ENCODE measurements at regions of chr1 and their contacts with region 1.

Region 1: DNA sequence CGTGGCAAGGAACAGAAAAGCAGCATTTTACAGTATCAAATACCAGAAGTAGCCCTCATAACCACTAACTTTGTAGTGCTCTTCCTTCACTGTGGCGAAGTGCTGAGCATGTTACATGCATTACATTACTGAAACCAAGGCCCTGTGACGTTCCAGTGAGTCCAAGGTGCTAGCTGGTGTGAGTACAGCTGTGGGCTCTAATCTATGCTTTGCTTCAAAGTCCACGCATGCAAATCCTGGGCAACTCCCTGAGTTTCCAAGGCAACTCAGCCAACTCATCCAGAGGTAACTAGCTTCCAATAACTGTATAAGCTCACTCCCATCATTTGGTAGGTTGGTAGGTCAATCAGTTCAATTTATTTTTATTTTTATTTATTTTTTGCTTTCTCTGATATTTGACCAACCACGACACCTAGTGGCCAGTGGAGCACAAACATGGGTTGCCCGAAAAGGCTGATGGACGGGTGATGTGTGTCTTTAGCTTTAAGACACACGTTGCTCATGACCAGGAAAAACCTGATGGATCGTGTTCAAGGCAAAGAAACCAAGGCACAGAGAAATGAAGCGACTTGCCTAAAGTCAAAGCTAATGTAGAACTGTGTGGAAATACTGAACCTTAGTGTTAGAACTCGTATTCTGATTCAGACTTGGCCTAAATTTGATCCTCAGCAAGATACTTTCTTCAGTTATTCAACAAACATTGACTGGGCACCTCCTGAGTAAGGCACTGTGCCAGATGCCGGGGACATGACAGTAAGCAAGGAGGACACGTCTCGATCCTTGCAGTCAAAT is 73.0 kb downstream of the GNG12 start:
- DNase-seq: peak in 1 of 2 donors; percentile 48
- ATAC-seq: peak; percentile 84 to 87
- H3K4me3 ChIP-seq: no peak overlapping the region
- H3K27ac ChIP-seq: peak overlapping the region; percentile 65 to 75 (median 71)
- H3K4me1 ChIP-seq: peaks cover 21 to 28% of the 10 kb centered on the region in 2 donors
- H3K27me3 ChIP-seq: no peaks in the 10 kb centered on the region
- CTCF ChIP-seq: peak; percentile 85 to 93 (median 89)
- POLR2A ChIP-seq: no peak

Region 2: GRCh38 chr1:67535474-67535873 is 224.8 kb before region 1 on chr1:
- in situ Hi-C with region 1: loop called (anchors 5 kb)
- intact Hi-C with region 1: loop called (anchors 1 kb)
- DNase-seq: peak; percentile 59 to 74
- ATAC-seq: peak; percentile 82 to 92
- H3K4me3 ChIP-seq: no peak overlapping the region
- H3K27ac ChIP-seq: no peak overlapping the region
- H3K4me1 ChIP-seq: peaks cover 6% of the 10 kb centered on the region in 2 donors
- H3K27me3 ChIP-seq: no peaks in the 10 kb centered on the region
- CTCF ChIP-seq: peak; percentile 91 to 97 (median 92)
- POLR2A ChIP-seq: no peak

Region 3: GRCh38 chr1:67561704-67562113 is 198.5 kb before region 1 on chr1:
- in situ Hi-C with region 1: no loop called
- intact Hi-C with region 1: loop called (anchors 1 kb)
- DNase-seq: peak; percentile 94 to 99
- ATAC-seq: peak; percentile 90 to 91
- H3K4me3 ChIP-seq: peak overlapping the region in 2 of 4 donors; percentile 0 to 19
- H3K27ac ChIP-seq: peak overlapping the region; percentile 88 to 94 (median 90)
- H3K4me1 ChIP-seq: peaks cover 27 to 48% of the 10 kb centered on the region in 2 donors
- H3K27me3 ChIP-seq: no peaks in the 10 kb centered on the region
- CTCF ChIP-seq: peak; percentile 90 to 95 (median 95)
- POLR2A ChIP-seq: peak in 1 of 2 donors; percentile 38

Region 4: DNA sequence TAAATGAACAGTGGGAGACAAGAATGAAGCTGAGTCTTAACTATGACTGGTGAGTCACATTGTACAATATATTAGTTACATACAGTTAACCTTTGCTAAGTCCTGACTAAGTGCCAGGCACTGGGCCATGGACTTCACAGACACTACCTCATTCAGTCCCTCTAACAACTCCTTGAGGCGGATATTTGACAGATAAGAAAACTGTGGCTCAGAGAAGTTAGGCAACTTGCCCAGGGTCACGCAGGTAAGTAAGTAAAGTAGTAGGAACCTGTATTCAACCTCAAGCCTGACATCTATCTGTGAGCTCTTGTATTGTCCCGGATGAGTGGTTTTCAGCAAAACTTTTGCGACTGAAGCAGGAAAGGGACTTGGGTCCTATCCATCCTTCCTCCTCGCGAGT is 10.9 kb after region 1 on chr1:
- in situ Hi-C with region 1: no loop called
- intact Hi-C with region 1: no loop called
- DNase-seq: no peak
- ATAC-seq: no peak
- H3K4me3 ChIP-seq: no peak overlapping the region
- H3K27ac ChIP-seq: no peak overlapping the region
- H3K4me1 ChIP-seq: peaks cover 0 to 6% of the 10 kb centered on the region in 2 donors
- H3K27me3 ChIP-seq: no peaks in the 10 kb centered on the region
- CTCF ChIP-seq: no peak
- POLR2A ChIP-seq: no peak

Region 5: DNA sequence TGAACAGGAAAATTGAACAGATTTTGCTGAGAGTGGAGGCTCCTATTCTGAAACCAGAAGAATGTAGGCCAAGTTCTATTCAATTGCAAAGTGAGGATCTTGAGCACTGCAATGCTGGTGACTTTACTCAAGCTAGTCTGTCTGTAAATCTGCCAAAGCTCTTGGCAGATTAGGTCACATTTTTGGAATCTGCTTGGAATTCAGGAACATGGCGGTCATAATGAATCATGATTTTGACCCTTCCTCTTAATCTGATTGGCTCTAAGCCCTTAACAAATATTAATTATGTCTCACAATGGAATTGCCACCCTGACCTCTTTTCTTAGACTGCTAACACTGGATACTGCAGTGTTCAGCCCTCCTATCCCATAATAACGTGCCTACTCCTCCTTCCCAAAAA is 80.2 kb after region 1 on chr1:
- in situ Hi-C with region 1: loop called in 1 of 4 experiments (anchors 10 kb)
- intact Hi-C with region 1: no loop called
- DNase-seq: no peak
- ATAC-seq: peak; percentile 21 to 33
- H3K4me3 ChIP-seq: no peak overlapping the region
- H3K27ac ChIP-seq: no peak overlapping the region
- H3K4me1 ChIP-seq: peaks cover 5 to 16% of the 10 kb centered on the region in 2 donors
- H3K27me3 ChIP-seq: no peaks in the 10 kb centered on the region
- CTCF ChIP-seq: no peak
- POLR2A ChIP-seq: no peak

Region 6: DNA sequence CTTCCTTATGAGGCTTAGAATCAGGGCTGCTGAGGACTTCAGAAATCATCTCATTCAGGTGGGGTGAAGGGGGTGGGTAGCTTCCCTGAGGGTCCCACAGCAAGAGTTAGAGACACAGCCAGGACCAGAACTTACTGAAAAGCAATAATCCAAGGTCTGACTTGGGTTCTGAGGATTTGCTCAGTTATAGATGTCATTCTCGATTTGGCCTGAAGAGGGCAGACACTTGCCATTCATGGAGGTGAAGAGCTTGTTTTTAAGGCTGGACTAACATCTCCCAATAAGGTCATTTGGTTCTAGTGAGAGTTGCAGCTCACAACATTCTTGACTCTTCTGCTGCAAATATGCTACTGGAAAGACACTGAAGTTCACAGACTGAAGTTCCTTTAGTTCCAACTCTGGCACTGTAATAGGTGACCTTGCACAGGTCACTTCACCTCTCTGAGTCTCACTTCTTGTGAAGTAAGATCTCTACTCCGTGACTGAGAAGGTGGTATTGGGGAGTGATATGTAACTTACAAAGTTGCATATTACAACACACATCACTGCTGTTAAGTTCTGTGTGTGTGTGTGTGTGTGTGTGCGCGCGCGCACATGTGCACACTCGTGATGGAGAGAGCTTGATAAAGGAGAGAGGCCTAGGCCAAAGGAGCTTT is 360.0 kb after region 1 on chr1:
- in situ Hi-C with region 1: loop called in 1 of 4 experiments (anchors 10 kb)
- intact Hi-C with region 1: no loop called
- DNase-seq: peak in 1 of 2 donors; percentile 27
- ATAC-seq: peak; percentile 57 to 84
- H3K4me3 ChIP-seq: no peak overlapping the region
- H3K27ac ChIP-seq: no peak overlapping the region
- H3K4me1 ChIP-seq: no peaks in the 10 kb centered on the region
- H3K27me3 ChIP-seq: no peaks in the 10 kb centered on the region
- CTCF ChIP-seq: peak; percentile 72 to 85 (median 79)
- POLR2A ChIP-seq: no peak

Region 7: DNA sequence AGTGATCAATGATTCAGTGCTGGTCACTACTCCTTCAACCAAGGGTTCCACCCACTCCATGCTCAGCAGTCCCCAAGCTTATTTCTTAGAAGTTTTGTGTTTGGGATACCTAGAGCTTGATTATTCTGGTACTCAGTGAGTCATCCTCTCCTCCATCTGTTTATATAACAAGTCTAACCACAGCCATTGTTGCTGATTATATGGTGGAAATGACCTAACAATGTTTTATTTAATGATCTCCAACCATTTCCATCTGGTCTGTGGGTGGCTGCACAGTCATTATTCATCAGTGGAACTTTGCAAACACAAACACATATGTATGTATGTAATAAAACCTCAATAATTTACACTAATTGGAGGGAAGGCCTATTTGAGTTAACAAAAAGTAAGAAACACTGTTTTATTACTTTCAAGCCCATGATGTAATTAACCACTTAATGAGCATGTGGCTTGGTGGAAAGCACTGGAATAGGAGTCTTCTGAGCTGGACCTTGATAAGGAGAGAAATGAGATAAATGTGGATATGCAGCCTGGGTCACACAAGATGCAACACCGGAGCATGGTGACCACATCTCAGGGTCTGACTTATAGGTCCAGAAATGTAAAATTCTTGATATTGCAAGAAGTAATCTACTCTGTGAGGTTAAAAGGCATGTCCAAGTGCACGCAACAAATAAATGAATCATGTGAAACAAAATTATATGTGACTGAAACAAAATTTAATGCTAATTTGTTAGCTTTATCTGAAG is 571.1 kb after region 1 on chr1:
- in situ Hi-C with region 1: loop called in 2 of 4 experiments (anchors 10 to 25 kb)
- intact Hi-C with region 1: no loop called
- DNase-seq: no peak
- ATAC-seq: no peak
- H3K4me3 ChIP-seq: no peak overlapping the region
- H3K27ac ChIP-seq: no peak overlapping the region
- H3K4me1 ChIP-seq: peaks cover 0 to 12% of the 10 kb centered on the region in 2 donors
- H3K27me3 ChIP-seq: no peaks in the 10 kb centered on the region
- CTCF ChIP-seq: no peak
- POLR2A ChIP-seq: no peak

Region 8: GRCh38 chr1:68346188-68346808 is 586.1 kb after region 1 on chr1:
- in situ Hi-C with region 1: loop called in 1 of 4 experiments (anchors 25 kb)
- intact Hi-C with region 1: loop called (anchors 10 kb)
- DNase-seq: no peak
- ATAC-seq: no peak
- H3K4me3 ChIP-seq: no peak overlapping the region
- H3K27ac ChIP-seq: no peak overlapping the region
- H3K4me1 ChIP-seq: no peaks in the 10 kb centered on the region
- H3K27me3 ChIP-seq: no peaks in the 10 kb centered on the region
- CTCF ChIP-seq: peak; percentile 11 to 62 (median 33)
- POLR2A ChIP-seq: no peak

Measured in gastrocnemius medialis (tissue), 4 donors.